BJ (cell line): ENCODE measurements at regions of chr15 and their contacts with region 1.

Region 1: DNA sequence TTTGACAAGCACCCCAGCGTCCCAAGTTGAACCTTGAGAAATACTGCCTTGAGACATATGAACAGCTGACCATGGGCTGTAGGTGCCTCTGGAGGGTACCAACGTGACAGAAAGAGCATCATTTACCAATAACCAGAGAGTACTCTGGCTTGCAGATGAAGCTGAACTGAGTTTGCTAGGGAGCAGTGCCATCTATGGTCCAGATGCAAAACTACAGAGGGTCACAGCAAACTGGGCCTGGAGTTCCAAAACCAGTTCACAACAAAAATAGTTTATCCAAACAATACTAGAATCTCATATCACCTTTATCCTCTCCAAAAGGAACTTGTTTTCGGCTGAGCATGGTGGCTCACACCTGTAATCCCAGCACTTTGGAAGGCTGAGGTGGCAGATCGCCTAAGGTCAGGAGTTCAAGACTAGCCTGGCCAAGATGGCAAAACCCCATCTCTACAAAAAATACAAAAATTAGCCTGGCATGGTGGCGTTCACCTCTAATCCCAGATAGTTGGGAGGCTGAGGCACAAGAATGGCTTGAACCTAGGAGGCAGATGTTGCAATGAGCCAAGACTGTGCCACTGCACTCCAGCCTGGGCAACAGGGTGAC is 69.3 kb downstream of the CHAC1 start:
- DNase-seq: no peak
- H3K4me3 ChIP-seq: no peak overlapping the region
- H3K27me3 ChIP-seq: no peaks in the 10 kb centered on the region
- CTCF ChIP-seq: peak; percentile 88

Region 2: GRCh38 chr15:40928821-40929659 is 93.5 kb before region 1 on chr15 and contains the start of gene DLL4:
- CTCF ChIA-PET with region 1: interaction called, 28 read pairs
- POLR2A ChIA-PET with region 1: no interaction called
- DNase-seq: no peak
- H3K4me3 ChIP-seq: peak within 1 kb of the TSS; percentile 51
- H3K27me3 ChIP-seq: peaks cover 33% of the 10 kb centered on the region
- CTCF ChIP-seq: no peak
- polyA plus RNA-seq, gene DLL4: 0.32 and 0.47 TPM in 2 replicates

Region 3: DNA sequence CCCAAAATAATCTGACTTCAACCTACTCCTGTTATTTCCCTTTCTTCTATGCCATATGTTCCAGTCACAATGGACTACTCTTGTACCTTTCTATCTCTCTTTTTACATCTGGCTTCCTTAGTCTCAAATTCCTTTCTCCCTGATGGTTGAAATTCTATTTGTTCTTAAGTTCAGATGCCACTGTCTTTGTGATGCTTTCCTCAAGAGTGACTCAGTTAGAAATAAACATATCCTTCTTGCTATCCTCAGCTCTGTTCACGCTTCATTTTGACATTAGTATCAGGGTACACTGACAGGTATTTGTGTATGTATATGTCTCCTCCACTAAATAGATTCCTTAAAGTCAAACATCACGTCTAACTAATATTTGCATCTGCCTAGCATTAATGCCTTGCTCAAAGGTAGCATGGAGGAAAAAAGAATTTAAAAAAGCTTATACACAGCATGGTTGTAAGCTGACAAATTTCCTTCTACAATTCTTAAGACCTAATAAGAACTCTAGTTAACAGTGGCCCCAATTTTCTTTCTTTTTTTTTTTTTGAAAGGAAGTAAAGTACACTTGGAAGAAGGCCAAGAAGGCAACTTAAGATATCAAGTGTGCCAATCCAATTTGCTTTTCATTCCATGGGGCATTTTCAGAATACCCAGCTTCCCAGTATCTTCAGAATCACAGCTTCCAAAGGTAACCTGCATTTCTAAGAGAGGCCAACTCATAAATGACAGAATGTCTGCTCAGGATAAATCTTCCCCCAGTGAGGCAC is 11.4 kb before region 1 on chr15:
- CTCF ChIA-PET with region 1: interaction called, 12 read pairs
- POLR2A ChIA-PET with region 1: interaction called, 3 read pairs
- DNase-seq: no peak
- H3K4me3 ChIP-seq: no peak overlapping the region
- H3K27me3 ChIP-seq: no peaks in the 10 kb centered on the region
- CTCF ChIP-seq: no peak